Left ventricle myocardium superior (tissue), 1 donor: ENCODE measurements at regions of chr1 and their contacts with region 1.

Region 1: DNA sequence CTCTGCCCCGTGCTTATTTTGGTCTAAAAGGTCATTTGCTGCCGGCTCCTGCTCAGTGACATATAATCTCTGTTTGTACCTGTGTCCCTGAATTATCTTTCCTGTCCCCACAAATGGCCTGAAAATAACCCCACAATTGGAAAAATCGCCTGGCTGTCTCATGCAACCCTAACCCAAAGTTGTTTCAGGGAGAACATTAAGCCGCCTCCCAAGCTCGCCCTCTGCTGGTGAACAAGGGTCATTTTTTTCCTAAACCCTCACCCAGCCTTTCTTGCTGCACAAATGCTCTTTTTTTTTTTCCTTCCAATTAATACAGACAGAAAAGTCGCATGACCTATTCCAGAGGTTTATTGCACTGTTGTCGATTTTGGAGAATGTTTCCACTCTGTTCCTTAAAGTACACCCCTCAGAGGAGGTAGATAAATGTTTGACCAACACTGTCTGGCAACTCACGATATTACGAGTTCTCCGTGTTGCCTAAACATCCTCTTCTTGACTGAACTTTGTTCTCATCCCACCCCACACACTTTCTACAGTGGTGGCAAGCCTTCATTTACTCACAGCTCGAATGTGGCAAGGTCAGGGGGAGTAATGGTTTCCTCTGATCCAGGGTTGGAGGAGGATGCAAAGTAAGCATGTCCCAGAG is 148.7 kb downstream of the ZZZ3 start:
- DNase-seq: peak; percentile 34
- ATAC-seq: peak; percentile 64

Region 2: GRCh38 chr1:77220687-77221463 is 312.9 kb before region 1 on chr1:
- intact Hi-C with region 1: loop called (anchors 10 kb)
- DNase-seq: no peak
- ATAC-seq: no peak

Region 3: GRCh38 chr1:77514921-77515776 is 18.6 kb before region 1 on chr1:
- intact Hi-C with region 1: no loop called
- DNase-seq: peak; percentile 63
- ATAC-seq: peak; percentile 97

Region 4: DNA sequence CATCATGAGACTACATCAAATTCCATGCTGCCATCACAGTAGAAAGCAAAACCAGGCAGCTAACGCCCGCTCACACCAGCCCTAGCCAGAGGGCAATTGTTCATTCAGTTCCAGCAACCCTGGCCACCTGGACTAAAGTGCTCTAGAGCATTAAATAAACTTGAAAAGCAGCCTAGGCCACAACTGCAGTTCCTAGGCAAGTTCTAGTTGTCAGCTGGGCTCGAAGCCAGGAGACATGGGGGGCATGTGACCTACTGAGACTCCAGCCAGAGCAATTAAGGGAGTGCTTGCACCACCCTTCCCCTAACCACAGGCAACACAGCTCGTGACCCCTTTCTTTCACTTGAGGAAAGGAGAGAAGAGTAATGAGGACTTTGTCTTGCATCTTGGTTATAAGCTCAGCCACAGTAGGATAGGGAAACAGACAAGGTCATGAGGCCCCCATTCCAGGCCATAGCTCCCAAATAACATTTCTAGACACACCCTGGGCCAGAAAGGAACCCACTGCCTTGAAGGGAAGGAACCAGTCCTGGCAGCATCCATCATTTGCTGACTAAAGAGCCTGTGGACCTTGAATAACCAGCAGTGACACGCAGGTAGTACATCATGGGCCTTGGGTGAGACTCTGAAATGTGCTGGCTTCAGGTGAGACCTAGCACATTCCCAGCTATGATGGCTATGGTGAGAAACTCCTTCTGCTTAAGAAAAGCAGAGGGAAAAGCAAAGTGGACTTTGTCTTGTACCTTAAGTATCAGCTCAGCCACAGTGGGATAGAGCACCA is 71.7 kb after region 1 on chr1:
- intact Hi-C with region 1: no loop called
- DNase-seq: peak; percentile 71
- ATAC-seq: peak; percentile 93